ENCODE measurements at regions of chr3 and their contacts with region 1.

Region 1: GRCh38 chr3:168815946-168816345 is 720.2 kb upstream of the GOLIM4 start:
- DNase-seq: no peak

Region 2: DNA sequence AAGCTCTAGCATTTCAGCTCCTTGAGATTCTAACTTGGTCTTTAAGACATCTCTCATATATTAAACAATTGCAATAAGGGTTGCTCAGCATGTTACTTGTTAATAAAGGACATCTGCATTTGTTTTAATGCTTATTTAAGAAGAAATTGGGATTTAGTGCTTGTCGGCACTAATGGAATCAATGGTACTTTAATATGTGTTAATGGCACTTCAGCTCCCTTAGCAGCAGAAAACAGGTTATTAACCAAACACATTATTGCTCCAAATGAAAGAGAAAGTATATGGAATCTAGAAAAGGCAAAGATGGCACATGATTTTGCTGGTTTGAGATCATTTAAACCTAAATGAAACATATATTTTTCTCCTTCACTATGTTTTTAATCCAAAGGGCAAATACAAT is 582.9 kb before region 1 on chr3:
- intact Hi-C with region 1: no loop called
- DNase-seq: no peak

Region 3: GRCh38 chr3:168828943-168829342 is 13.0 kb after region 1 on chr3:
- intact Hi-C with region 1: loop called in 1 of 2 experiments (anchors 1 kb)
- DNase-seq: no peak

Measured in posterior vena cava (tissue), 2 donors.